Natural killer cell (primary cell): ENCODE measurements at regions of chr2 and their contacts with region 1.

Region 1: DNA sequence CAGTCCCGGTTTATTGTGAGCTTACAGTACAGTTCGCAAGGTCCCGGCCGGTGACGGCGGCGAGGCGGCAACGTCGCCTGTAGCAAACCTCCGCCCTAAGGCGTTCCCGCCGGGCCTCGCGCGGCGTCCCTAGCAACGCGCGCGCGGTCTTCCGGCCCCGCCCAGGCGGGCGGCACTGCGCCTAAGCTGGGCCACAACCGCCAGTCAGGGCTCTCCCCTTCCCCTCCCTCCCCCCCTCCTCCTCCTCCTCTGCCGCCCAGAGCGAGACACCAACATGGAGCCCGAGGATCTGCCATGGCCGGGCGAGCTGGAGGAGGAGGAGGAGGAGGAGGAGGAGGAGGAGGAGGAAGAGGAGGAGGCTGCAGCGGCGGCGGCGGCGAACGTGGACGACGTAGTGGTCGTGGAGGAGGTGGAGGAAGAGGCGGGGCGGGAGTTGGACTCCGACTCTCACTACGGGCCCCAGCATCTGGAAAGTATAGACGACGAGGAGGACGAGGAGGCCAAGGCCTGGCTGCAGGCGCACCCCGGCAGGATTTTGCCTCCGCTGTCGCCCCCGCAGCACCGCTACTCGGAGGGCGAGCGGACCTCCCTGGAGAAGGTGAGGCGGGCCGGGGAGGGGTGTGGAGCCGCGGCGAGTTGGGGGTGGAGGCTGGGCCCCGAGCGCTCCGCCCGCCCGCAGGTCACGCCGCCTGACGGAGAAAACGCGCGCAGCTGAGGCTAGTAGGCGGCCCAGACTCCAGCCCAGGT is at the start of gene ALMS1:
- DNase-seq: peak; percentile 81 to 96
- ATAC-seq: peak; percentile 87 to 96 (median 88)
- H3K4me3 ChIP-seq: peak within 1 kb of the TSS; percentile 95
- H3K4me3 Mint-ChIP-seq: peak within 1 kb of the TSS; percentile 87
- H3K27ac ChIP-seq: peak within 1 kb of the TSS; percentile 89
- H3K27ac Mint-ChIP-seq: peak within 1 kb of the TSS; percentile 91
- H3K4me1 ChIP-seq: peaks cover 13% of the 10 kb centered on the region
- H3K4me1 Mint-ChIP-seq: peaks cover 19 to 30% of the 10 kb centered on the region in 2 donors
- H3K27me3 ChIP-seq: no peaks in the 10 kb centered on the region
- H3K27me3 Mint-ChIP-seq: peaks cover 17 to 27% of the 10 kb centered on the region in 2 donors
- CTCF ChIP-seq: no peak
- total RNA-seq, gene ALMS1: 22.9 to 33.8 (median 26.9) TPM

Region 2: GRCh38 chr2:73243884-73244570 is 141.7 kb before region 1 on chr2:
- intact Hi-C with region 1: no loop called
- DNase-seq: no peak
- ATAC-seq: no peak
- H3K4me3 ChIP-seq: no peak overlapping the region
- H3K4me3 Mint-ChIP-seq: no peak overlapping the region
- H3K27ac ChIP-seq: no peak overlapping the region
- H3K27ac Mint-ChIP-seq: no peak overlapping the region
- H3K4me1 ChIP-seq: no peaks in the 10 kb centered on the region
- H3K4me1 Mint-ChIP-seq: peaks cover 0 to 13% of the 10 kb centered on the region in 2 donors
- H3K27me3 ChIP-seq: no peaks in the 10 kb centered on the region
- H3K27me3 Mint-ChIP-seq: no peaks in the 10 kb centered on the region
- CTCF ChIP-seq: no peak

Region 3: DNA sequence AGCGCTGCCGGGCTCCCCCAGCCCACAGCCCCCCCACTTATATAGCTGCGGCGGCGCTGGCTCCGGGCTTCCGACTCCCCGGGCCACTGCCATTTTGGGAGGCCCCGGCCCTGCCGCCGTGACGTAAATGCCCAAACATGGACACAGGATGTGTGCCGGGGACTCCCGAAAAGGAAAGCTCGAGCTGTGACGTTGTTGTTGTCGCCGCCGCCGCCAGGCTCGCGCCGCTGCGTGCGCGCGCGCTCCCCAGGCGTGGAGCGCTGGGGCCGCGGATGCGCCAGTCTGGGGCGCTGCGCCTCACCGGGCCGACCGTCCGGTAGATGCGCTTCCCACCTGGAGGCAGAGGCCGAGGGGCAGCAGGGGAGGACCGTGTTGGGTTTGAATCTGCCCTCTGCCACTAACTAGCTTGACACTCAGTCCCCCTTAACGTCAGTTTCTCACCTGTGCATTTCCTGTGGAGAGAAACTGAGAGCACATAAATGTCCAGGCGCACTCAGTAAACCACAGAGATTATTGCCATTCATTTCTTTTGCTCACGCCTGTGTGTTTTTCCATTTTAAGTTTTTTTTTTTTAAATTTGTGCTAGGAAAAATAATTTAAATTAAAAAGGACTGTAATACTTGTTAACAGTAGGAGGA is 92.1 kb before region 1 on chr2 and contains the start of gene EGR4:
- intact Hi-C with region 1: loop called (anchors 2 kb)
- DNase-seq: peak; percentile 85 to 95
- ATAC-seq: peak; percentile 93 to 95 (median 94)
- H3K4me3 ChIP-seq: peak within 1 kb of the TSS; percentile 30
- H3K4me3 Mint-ChIP-seq: peak within 1 kb of the TSS; percentile 72
- H3K27ac ChIP-seq: no peak within 1 kb of the TSS
- H3K27ac Mint-ChIP-seq: peak within 1 kb of the TSS in 1 of 2 donors; percentile 75
- H3K4me1 ChIP-seq: peaks cover 26% of the 10 kb centered on the region
- H3K4me1 Mint-ChIP-seq: peaks cover 7 to 8% of the 10 kb centered on the region in 2 donors
- H3K27me3 ChIP-seq: peaks cover 63% of the 10 kb centered on the region
- H3K27me3 Mint-ChIP-seq: peaks cover 59 to 62% of the 10 kb centered on the region in 2 donors
- CTCF ChIP-seq: no peak
- total RNA-seq, gene EGR4: 0.28 to 2.6 (median 1.1) TPM

Region 4: GRCh38 chr2:73333564-73333963 is 52.2 kb before region 1 on chr2:
- intact Hi-C with region 1: no loop called
- DNase-seq: no peak
- ATAC-seq: no peak
- H3K4me3 ChIP-seq: no peak overlapping the region
- H3K4me3 Mint-ChIP-seq: no peak overlapping the region
- H3K27ac ChIP-seq: no peak overlapping the region
- H3K27ac Mint-ChIP-seq: no peak overlapping the region
- H3K4me1 ChIP-seq: no peaks in the 10 kb centered on the region
- H3K4me1 Mint-ChIP-seq: peaks cover 5 to 6% of the 10 kb centered on the region in 2 donors
- H3K27me3 ChIP-seq: no peaks in the 10 kb centered on the region
- H3K27me3 Mint-ChIP-seq: peaks cover 11 to 64% of the 10 kb centered on the region in 2 donors
- CTCF ChIP-seq: no peak

Region 5: DNA sequence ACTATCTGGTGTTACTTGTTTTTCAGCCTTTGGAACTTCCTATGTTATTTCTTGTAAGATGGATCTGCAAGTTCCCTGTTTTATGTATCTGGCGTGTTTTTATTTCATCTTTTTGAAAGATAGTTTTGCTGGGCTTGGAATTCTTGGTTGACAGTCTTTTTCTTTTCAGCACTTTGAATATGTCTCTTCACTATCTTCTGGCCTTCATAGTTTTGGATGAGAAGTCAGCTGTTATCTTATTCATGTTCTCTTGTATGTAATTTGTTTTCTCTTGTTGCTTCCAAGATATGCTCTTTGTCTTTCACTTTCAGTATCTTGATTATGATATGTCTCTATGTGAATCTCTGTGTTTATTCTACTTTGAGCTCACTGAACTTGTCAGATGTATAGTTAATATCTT is 50.3 kb after region 1 on chr2:
- intact Hi-C with region 1: no loop called
- DNase-seq: no peak
- ATAC-seq: no peak
- H3K4me3 ChIP-seq: no peak overlapping the region
- H3K4me3 Mint-ChIP-seq: no peak overlapping the region
- H3K27ac ChIP-seq: no peak overlapping the region
- H3K27ac Mint-ChIP-seq: no peak overlapping the region
- H3K4me1 ChIP-seq: no peaks in the 10 kb centered on the region
- H3K4me1 Mint-ChIP-seq: no peaks in the 10 kb centered on the region
- H3K27me3 ChIP-seq: no peaks in the 10 kb centered on the region
- H3K27me3 Mint-ChIP-seq: no peaks in the 10 kb centered on the region
- CTCF ChIP-seq: no peak